ENCODE measurements at regions of chr19 and their contacts with region 1.

Region 1: GRCh38 chr19:40305403-40305802 is 20.3 kb upstream of the AKT2 start:
- DNase-seq: peak; percentile 92
- H3K4me3 Mint-ChIP-seq: no peak overlapping the region
- H3K27ac Mint-ChIP-seq: no peak overlapping the region
- H3K4me1 Mint-ChIP-seq: peaks cover 8% of the 10 kb centered on the region
- H3K27me3 Mint-ChIP-seq: no peaks in the 10 kb centered on the region
- CTCF ChIP-seq: peak; percentile 72

Region 2: DNA sequence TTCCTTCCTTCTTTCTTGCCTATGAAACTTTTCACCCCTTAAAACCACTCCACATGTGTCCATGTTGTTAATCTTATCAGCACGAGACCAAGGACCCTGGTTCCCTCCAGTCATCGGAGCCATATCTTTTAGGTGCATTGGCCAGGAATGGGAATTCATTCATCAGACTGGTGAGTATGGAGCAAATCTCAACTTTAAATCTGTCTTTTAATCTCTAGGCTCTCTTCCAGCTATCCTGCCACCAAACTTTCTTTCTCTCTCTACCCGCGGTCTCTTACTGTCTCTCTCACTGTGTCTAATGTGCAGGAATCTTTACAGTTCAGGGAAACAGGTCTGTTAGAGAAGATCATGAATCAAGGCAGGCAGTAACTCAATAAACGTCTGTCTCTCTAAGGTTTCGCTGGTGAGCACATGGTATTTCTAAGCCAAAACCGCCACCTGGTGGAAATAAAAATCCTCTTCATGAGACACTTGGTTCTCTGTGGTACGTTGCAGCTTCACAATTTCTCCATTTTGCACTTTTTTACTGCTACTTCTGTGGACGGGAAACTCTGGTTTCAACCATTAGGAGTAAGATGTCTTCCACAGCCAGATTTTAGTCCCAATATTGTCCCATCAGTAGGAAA is 633.6 kb before region 1 on chr19:
- CTCF ChIA-PET with region 1: no interaction called
- POLR2A ChIA-PET with region 1: no interaction called
- intact Hi-C with region 1: no loop called
- DNase-seq: peak; percentile 66
- H3K4me3 Mint-ChIP-seq: no peak overlapping the region
- H3K27ac Mint-ChIP-seq: no peak overlapping the region
- H3K4me1 Mint-ChIP-seq: peaks cover 6% of the 10 kb centered on the region
- H3K27me3 Mint-ChIP-seq: peaks cover 45% of the 10 kb centered on the region
- CTCF ChIP-seq: peak; percentile 43

Region 3: DNA sequence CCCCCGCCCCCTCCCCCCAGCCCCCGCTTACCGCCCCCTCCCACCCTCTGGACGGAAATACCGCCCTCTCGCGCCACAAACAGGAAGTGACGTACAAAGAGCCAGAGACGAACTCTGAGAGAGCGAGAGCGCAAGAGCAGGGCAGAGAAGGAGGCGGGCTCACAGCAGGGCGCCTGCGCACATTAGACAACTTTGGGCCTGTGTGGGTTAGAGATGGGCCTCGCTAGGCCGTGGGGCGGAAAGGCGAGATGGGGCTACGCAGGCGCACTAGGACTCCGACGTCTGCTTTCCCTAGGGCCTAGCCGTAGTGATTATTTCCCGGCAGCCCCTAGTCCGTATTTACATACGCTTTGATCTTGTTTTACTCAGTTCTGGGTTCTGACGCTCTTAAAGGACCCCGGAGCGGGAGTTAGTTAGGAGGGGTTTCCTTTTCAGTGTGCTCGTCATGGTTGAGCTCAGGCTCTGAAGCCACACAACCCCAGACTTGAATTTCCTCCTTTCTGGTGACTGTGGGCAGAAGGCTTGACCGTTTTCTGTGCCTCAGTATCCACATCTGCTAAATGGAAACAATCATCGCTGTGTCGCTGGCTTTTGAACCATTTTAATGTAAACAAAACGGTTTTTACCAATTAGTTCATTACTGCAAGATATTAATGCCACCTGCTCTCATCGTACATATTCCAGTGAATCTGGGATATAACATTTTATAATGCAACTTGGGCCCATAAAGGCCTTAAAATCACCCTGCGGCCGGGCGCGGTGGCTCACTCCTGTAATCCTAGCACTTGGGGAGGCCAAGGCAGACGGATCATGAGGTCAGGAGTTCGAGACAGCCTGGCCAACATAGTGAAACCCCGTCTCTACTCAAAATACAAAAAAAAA is 19.8 kb before region 1 on chr19:
- CTCF ChIA-PET with region 1: interaction called, 6 read pairs
- POLR2A ChIA-PET with region 1: interaction called, 15 read pairs
- intact Hi-C with region 1: no loop called
- DNase-seq: peak; percentile 100
- H3K4me3 Mint-ChIP-seq: peak overlapping the region; percentile 92
- H3K27ac Mint-ChIP-seq: peak overlapping the region; percentile 100
- H3K4me1 Mint-ChIP-seq: peaks cover 19% of the 10 kb centered on the region
- H3K27me3 Mint-ChIP-seq: no peaks in the 10 kb centered on the region
- CTCF ChIP-seq: no peak

Region 4: GRCh38 chr19:40331069-40331468 is 25.7 kb after region 1 on chr19:
- CTCF ChIA-PET with region 1: interaction called, 11 read pairs
- POLR2A ChIA-PET with region 1: interaction called, 13 read pairs
- intact Hi-C with region 1: no loop called
- DNase-seq: peak; percentile 76
- H3K4me3 Mint-ChIP-seq: no peak overlapping the region
- H3K27ac Mint-ChIP-seq: peak overlapping the region; percentile 85
- H3K4me1 Mint-ChIP-seq: peaks cover 6% of the 10 kb centered on the region
- H3K27me3 Mint-ChIP-seq: no peaks in the 10 kb centered on the region
- CTCF ChIP-seq: no peak

Region 5: GRCh38 chr19:40425450-40426287 is 120.3 kb after region 1 on chr19 and contains the start of gene SERTAD1:
- CTCF ChIA-PET with region 1: interaction called, 11 read pairs
- POLR2A ChIA-PET with region 1: interaction called, 8 read pairs
- intact Hi-C with region 1: loop called (anchors 1 kb)
- DNase-seq: peak; percentile 99
- H3K4me3 Mint-ChIP-seq: peak within 1 kb of the TSS; percentile 95
- H3K27ac Mint-ChIP-seq: peak within 1 kb of the TSS; percentile 97
- H3K4me1 Mint-ChIP-seq: no peaks in the 10 kb centered on the region
- H3K27me3 Mint-ChIP-seq: no peaks in the 10 kb centered on the region
- CTCF ChIP-seq: peak; percentile 86
- total RNA-seq, gene SERTAD1: 16.2 and 17.9 TPM in 2 replicates

Region 6: DNA sequence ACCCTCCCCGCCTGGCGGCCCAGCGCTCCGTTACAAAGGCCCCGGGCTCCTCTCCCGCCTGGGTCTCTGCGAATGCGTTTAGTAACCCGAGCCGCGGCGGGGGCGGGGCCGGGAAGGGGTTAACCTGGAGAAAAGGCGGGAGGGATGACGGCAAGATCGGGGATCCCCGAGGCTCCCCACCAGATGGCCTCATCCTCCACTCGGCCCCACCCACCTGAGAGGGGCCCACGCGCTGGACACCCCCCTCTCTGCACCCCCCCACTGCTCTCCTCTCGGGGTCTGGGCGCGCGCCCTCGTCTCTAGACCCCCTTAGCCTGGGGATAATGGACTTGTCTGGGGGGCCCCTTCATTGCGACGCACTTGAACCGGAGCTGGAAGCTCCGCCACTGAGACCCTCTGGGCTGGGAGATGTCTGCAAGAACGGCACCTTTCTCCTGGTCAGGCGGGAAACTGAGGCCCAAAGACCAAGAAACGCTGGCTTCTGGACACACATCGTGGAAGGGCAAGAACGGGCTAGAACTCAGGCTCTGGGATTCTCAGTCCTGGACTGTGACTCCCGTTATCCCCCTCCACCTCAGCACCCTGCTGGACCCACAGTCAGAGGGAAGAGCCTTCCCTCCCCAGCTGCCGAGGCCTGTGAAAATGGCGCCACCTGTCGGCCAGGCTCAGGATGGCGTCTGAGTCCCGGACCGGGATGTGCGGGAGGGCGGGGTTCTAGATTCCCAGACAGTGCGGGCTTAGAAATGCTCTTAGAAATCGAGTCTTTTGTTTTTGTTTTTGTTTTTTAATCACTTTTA is 292.9 kb after region 1 on chr19:
- CTCF ChIA-PET with region 1: interaction called, 8 read pairs
- POLR2A ChIA-PET with region 1: interaction called, 8 read pairs
- intact Hi-C with region 1: loop called (anchors 1 kb)
- DNase-seq: peak; percentile 94
- H3K4me3 Mint-ChIP-seq: peak overlapping the region; percentile 54
- H3K27ac Mint-ChIP-seq: no peak overlapping the region
- H3K4me1 Mint-ChIP-seq: peaks cover 44% of the 10 kb centered on the region
- H3K27me3 Mint-ChIP-seq: no peaks in the 10 kb centered on the region
- CTCF ChIP-seq: peak; percentile 96

Measured in MCF 10A (cell line).